ENCODE measurements at regions of chr12 and their contacts with region 1.

Region 1: GRCh38 chr12:118183705-118184104 is 47.8 kb downstream of the PEBP1 start:
- DNase-seq: no peak
- ATAC-seq: no peak
- H3K4me3 Mint-ChIP-seq: no peak overlapping the region
- H3K27ac Mint-ChIP-seq: peak overlapping the region; percentile 11
- H3K4me1 Mint-ChIP-seq: peaks cover 27% of the 10 kb centered on the region
- H3K27me3 Mint-ChIP-seq: no peaks in the 10 kb centered on the region
- CTCF ChIP-seq: no peak

Region 2: DNA sequence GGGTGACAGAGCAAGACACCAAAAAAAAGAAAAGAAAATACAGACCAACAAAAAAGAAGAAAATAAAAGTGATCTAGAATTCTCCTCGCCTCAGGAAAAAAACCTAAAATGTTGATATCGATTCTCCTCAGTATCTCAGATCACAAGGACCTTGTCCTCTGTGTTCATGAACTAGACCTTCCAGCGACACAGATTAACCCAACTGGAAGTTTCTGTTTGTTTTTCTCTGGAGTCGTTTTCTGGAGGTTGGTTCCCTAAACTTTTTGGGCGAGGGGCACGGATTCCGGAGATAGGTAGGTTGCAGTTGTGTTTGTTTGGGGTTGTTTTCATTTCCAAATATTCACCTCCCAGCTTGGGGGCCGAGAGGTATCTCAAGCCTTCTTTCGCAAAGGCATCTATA is 167.8 kb before region 1 on chr12:
- CTCF ChIA-PET with region 1: no interaction called
- POLR2A ChIA-PET with region 1: no interaction called
- intact Hi-C with region 1: no loop called
- DNase-seq: no peak
- ATAC-seq: no peak
- H3K4me3 Mint-ChIP-seq: peak overlapping the region; percentile 85
- H3K27ac Mint-ChIP-seq: no peak overlapping the region
- H3K4me1 Mint-ChIP-seq: peaks cover 12% of the 10 kb centered on the region
- H3K27me3 Mint-ChIP-seq: no peaks in the 10 kb centered on the region
- CTCF ChIP-seq: no peak

Region 3: DNA sequence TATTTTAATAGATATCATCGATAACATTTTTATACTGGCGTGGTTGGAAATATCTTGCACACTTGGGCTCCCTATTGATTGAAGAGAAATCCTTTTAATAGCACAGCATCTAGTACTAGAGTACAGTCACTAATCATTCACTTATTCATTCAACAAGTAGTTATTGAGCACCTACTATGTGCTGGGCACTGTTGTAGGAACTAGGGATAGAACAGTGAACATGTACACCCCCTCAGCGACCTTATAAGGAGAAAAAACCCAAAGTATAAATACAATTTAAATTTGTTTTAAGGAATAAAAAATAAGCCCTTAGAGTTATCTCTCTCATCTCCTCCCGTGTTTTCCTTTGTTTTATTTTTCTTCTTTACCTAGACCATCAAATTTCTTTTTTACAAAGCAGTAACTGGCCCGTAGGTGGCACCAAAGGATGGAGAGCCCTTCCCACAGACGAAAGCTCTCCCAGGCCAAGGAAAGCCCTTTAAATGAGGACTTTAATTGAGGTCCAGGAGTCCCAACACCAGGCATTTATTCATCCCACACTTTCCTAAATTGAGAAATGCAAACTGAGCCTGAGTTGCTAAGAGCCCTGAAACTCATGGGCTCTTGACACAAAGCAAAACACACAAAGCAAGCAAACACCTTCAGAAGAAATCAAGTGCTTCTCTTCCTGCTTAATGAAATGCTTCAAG is 18.8 kb before region 1 on chr12:
- CTCF ChIA-PET with region 1: interaction called, 33 read pairs
- POLR2A ChIA-PET with region 1: interaction called, 3 read pairs
- intact Hi-C with region 1: no loop called
- DNase-seq: peak; percentile 26
- ATAC-seq: no peak
- H3K4me3 Mint-ChIP-seq: no peak overlapping the region
- H3K27ac Mint-ChIP-seq: no peak overlapping the region
- H3K4me1 Mint-ChIP-seq: peaks cover 26% of the 10 kb centered on the region
- H3K27me3 Mint-ChIP-seq: no peaks in the 10 kb centered on the region
- CTCF ChIP-seq: no peak

Region 4: GRCh38 chr12:118290130-118290529 is 106.4 kb after region 1 on chr12:
- CTCF ChIA-PET with region 1: no interaction called
- POLR2A ChIA-PET with region 1: no interaction called
- intact Hi-C with region 1: no loop called
- DNase-seq: no peak
- ATAC-seq: no peak
- H3K4me3 Mint-ChIP-seq: no peak overlapping the region
- H3K27ac Mint-ChIP-seq: no peak overlapping the region
- H3K4me1 Mint-ChIP-seq: peaks cover 11% of the 10 kb centered on the region
- H3K27me3 Mint-ChIP-seq: no peaks in the 10 kb centered on the region
- CTCF ChIP-seq: no peak

Region 5: DNA sequence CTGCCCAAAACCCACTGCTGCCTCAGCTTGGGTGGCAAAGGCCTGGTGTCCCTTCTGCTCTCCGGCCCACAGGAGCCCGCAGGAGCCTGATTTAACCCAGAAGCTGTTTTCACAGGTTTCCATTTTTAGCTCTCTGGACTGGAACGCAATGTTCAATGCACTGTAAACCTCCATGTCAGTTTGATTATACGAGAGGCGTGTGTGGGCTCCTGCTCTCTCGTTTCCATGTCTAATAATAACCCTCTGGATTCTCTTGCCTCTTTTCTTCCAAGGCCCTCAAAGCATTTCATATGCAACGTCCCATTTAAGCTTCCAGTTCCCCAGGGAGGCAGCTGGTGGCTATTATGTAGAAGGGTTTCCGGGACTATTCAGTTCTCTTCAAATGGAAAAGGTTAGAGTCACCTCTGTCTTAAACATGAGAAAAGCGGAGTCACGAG is 353.8 kb after region 1 on chr12:
- CTCF ChIA-PET with region 1: no interaction called
- POLR2A ChIA-PET with region 1: no interaction called
- intact Hi-C with region 1: no loop called
- DNase-seq: no peak
- ATAC-seq: no peak
- H3K4me3 Mint-ChIP-seq: no peak overlapping the region
- H3K27ac Mint-ChIP-seq: no peak overlapping the region
- H3K4me1 Mint-ChIP-seq: no peaks in the 10 kb centered on the region
- H3K27me3 Mint-ChIP-seq: peaks cover 3% of the 10 kb centered on the region
- CTCF ChIP-seq: no peak